ENCODE measurements at regions of chr19 and their contacts with region 1.

Region 1: DNA sequence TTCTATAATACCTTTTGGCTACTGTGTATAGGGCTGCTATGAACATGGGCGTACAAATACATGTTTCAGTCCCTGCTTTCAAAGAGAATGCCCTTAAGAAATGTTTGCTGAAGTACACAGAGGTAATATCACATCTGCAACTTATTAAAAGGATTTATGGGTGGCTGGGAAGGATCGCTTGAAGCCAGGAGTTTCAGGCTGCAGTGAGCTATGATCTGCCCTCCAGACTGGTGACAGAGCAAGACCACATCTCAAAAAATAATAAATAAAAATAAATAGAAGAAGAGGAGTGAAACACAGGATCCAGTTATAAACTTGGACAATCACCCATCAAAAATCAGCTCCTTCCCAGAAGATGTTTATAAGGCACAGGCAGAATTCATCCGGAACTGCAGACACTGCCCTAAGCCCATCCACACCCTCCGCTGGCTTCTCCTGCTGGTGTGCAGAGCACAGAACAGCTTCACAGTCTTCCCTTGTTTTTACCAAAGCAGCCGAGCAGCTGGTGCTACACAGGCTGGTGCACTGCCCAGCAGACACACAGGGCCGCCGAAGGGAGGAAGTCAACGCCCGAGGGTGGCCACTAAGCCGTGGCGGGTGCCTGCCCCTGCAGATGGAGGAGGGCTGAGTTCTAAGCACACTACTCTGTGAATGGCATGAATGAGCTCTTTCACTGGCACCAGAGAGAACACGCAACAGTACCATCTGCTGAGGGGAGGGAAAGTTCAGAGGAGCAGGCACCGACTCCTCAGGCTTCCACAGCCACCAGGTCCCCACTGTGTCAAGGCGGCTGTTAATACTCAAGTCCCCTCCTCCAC is 44.0 kb downstream of the BRD4 start:
- DNase-seq: no peak
- H3K4me3 Mint-ChIP-seq: no peak overlapping the region
- H3K27ac Mint-ChIP-seq: peak overlapping the region; percentile 51
- H3K4me1 Mint-ChIP-seq: peaks cover 85% of the 10 kb centered on the region
- H3K27me3 Mint-ChIP-seq: no peaks in the 10 kb centered on the region

Region 2: GRCh38 chr19:15323496-15324227 is 35.3 kb after region 1 on chr19:
- intact Hi-C with region 1: loop called (anchors 5 kb)
- DNase-seq: no peak
- H3K4me3 Mint-ChIP-seq: no peak overlapping the region
- H3K27ac Mint-ChIP-seq: peak overlapping the region; percentile 44
- H3K4me1 Mint-ChIP-seq: peaks cover 67% of the 10 kb centered on the region
- H3K27me3 Mint-ChIP-seq: no peaks in the 10 kb centered on the region

Region 3: DNA sequence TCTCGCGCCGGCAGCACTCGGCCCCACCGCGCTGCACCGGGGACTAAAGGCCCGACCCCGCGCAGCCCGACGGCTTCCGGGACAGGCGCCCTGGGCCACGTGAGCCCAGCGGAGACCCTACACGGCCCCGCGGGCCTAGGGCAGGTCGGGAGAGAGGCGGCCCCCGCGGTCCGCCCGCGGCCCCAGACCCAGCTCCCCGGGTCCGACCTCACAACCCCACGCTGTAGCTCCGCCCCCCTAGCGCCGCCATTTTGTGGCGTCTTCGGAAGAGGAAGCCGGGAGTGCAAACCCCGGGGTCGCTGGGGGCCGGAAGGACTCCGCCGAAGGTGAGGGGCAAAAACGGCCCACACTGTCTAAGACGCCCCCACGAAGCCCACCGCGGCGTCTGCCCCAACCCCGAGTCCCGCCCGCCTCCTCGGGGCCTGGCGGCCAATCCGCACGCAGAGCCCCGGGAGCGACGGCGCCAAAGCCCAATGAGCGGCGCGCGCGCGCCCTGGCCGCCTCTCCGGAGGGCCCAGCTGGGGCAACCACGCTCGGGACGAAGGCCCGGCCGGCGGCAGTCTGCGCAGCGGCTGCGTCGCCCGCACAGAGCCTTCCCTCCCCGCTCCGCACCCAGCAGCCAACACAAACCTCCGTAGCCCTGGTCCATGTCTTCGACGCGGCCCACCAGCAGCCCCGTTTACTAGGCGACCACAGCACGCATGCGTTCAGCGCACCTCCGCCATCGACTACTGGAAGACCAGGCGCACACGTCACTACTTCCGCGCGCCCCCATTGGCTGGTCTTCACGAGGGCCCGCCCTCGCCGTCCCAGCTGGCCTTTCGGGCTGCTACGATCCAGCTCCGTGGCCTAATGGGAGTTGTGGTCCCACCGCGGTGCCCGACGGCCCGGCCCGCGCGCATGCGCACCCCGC is 91.0 kb after region 1 on chr19 and contains the start of gene AKAP8:
- intact Hi-C with region 1: loop called (anchors 5 kb)
- DNase-seq: peak; percentile 98
- H3K4me3 Mint-ChIP-seq: peak within 1 kb of the TSS; percentile 98
- H3K27ac Mint-ChIP-seq: peak within 1 kb of the TSS; percentile 100
- H3K4me1 Mint-ChIP-seq: peaks cover 30% of the 10 kb centered on the region
- H3K27me3 Mint-ChIP-seq: no peaks in the 10 kb centered on the region
- total RNA-seq, gene AKAP8: 56.0 and 62.1 TPM in 2 replicates

Measured in activated T-helper 2 cell treated with anti-CD3 and anti-CD28 coated beads, Interferon-gamma antibody, Interleukin-2, Interleukin-4, amounts not matched to agents 10 μg/mL and 5 μg/mL and 100 μg/mL, durations not matched to agents 14 hours and 24 hours and 36 hours (primary cell).